CD8-positive, alpha-beta T cell (primary cell): ENCODE measurements at regions of chrX and their contacts with region 1.

Region 1: DNA sequence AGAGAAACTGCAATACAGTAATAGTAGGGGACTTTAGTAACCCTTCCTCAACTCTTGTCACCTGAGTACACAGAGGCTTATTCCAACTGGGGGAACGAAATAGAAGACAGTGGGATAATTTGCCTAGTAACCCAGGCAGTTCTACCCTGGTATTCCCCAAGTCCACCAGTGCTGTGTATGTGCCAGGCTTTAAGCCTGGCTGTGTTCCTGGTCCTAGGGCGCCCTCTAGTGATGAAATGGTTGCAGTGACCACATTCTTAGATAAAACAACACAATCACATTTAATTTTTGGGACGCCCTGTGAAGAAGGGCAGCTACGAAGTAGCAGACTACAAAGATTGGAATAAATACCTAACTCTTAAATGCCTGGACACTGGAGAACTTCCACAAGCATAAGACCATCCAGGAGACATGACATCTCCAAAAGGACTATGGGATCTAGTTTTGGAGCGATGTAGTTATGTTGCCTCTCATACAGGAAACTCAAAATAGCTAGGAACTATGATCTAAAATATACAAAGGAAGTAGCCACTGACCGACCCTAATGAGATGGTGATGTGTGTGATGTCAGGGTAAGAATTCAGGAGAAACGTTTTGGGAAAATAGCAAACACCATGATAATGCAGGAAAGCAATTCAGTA is 288.5 kb upstream of the ZCCHC13 start:
- DNase-seq: peak; percentile 12 to 80 (median 59)
- ATAC-seq: no peak
- H3K4me3 ChIP-seq: no peak overlapping the region
- H3K4me3 Mint-ChIP-seq: no peak overlapping the region
- H3K27ac ChIP-seq: no peak overlapping the region
- H3K27ac Mint-ChIP-seq: no peak overlapping the region
- H3K4me1 ChIP-seq: no peaks in the 10 kb centered on the region
- H3K4me1 Mint-ChIP-seq: peaks cover 4% of the 10 kb centered on the region
- H3K27me3 ChIP-seq: no peaks in the 10 kb centered on the region
- H3K27me3 Mint-ChIP-seq: no peaks in the 10 kb centered on the region
- CTCF ChIP-seq: peak; percentile 75

Region 2: DNA sequence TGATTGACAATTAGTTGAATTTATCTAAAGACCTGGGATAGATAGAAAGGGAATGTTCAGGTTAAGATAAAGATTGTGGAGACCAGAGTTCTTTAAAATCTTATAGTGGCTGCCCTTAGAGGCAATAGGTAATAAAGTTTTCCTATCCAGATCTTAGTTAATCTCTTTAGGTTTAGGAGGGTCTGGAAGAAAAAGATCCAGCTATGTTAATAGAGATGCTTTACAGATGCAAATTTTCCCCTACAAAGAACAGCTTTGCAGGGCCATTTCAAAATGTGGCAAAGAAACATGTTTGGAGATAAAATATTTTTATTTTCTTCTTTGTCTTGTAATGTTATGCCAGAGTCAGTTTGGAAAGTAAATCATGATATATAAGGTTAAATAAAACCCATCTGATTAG is 506.6 kb before region 1 on chrX:
- CTCF ChIA-PET with region 1: no interaction called
- POLR2A ChIA-PET with region 1: no interaction called
- intact Hi-C with region 1: no loop called
- DNase-seq: no peak
- ATAC-seq: no peak
- H3K4me3 ChIP-seq: no peak overlapping the region
- H3K4me3 Mint-ChIP-seq: no peak overlapping the region
- H3K27ac ChIP-seq: no peak overlapping the region
- H3K27ac Mint-ChIP-seq: no peak overlapping the region
- H3K4me1 ChIP-seq: no peaks in the 10 kb centered on the region
- H3K4me1 Mint-ChIP-seq: no peaks in the 10 kb centered on the region
- H3K27me3 ChIP-seq: no peaks in the 10 kb centered on the region
- H3K27me3 Mint-ChIP-seq: no peaks in the 10 kb centered on the region
- CTCF ChIP-seq: no peak

Region 3: DNA sequence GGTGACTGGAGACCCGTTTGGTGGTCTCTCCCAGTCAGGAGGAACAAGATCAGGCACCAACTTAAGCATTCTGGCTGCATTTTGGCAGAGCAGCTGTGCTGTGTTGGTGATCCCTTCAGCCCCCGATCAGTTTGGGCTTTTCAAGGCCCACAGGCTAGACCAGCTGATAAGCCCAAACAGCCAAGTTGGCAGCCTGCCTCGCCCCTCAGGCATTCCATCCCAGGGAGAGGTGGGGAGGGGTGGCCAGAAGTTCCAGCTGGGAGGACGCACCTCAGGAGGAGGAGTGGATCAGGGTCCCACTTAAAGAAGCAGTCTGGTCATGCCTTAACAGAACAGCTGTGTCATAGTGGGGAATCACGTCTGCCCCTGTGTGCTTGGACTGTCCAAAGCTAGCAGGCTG is 346.7 kb before region 1 on chrX:
- CTCF ChIA-PET with region 1: no interaction called
- POLR2A ChIA-PET with region 1: no interaction called
- intact Hi-C with region 1: no loop called
- DNase-seq: no peak
- ATAC-seq: no peak
- H3K4me3 ChIP-seq: no peak overlapping the region
- H3K4me3 Mint-ChIP-seq: no peak overlapping the region
- H3K27ac ChIP-seq: no peak overlapping the region
- H3K27ac Mint-ChIP-seq: no peak overlapping the region
- H3K4me1 ChIP-seq: no peaks in the 10 kb centered on the region
- H3K4me1 Mint-ChIP-seq: peaks cover 7% of the 10 kb centered on the region
- H3K27me3 ChIP-seq: no peaks in the 10 kb centered on the region
- H3K27me3 Mint-ChIP-seq: no peaks in the 10 kb centered on the region
- CTCF ChIP-seq: no peak

Region 4: DNA sequence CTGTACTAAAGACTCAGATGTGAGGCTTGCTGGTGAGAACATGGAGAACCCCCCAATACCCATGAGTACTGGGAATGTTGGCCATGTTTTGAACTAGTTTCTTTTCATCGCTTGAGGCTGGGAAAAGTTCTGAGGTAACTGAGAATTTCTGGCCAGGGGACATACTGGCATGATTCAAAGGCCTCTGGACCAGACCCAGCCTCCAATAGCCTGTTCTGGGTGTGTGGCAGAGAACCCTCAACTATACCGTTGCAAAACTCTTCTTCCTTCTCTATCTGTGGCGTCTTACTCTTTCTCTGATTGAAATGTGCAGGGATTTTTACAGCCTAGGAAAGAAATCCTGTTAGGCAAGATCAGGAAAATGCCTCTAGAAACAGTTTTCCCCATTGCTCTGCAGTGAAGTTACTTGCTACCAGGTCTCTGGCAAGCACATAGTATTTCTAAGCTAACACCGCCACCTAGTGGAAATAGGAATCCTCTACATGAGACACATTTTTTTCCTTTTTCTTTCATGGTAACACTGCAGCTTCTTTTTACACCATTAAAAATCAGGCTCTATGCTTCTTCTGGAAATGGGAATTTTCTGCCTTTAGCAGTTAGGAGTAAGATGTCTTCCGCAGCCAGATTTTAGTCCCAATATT is 117.8 kb after region 1 on chrX:
- CTCF ChIA-PET with region 1: no interaction called
- POLR2A ChIA-PET with region 1: no interaction called
- intact Hi-C with region 1: loop called (anchors 2 kb)
- DNase-seq: peak in 5 of 9 experiments; percentile 10 to 60 (median 28)
- ATAC-seq: peak; percentile 40
- H3K4me3 ChIP-seq: no peak overlapping the region
- H3K4me3 Mint-ChIP-seq: no peak overlapping the region
- H3K27ac ChIP-seq: no peak overlapping the region
- H3K27ac Mint-ChIP-seq: no peak overlapping the region
- H3K4me1 ChIP-seq: no peaks in the 10 kb centered on the region
- H3K4me1 Mint-ChIP-seq: no peaks in the 10 kb centered on the region
- H3K27me3 ChIP-seq: no peaks in the 10 kb centered on the region
- H3K27me3 Mint-ChIP-seq: no peaks in the 10 kb centered on the region
- CTCF ChIP-seq: no peak

Region 5: GRCh38 chrX:74343343-74344279 is 328.1 kb after region 1 on chrX:
- CTCF ChIA-PET with region 1: no interaction called
- POLR2A ChIA-PET with region 1: no interaction called
- intact Hi-C with region 1: loop called in 1 of 2 experiments (anchors 5 kb)
- DNase-seq: peak; percentile 1 to 67 (median 33)
- ATAC-seq: peak; percentile 40
- H3K4me3 ChIP-seq: no peak overlapping the region
- H3K4me3 Mint-ChIP-seq: no peak overlapping the region
- H3K27ac ChIP-seq: no peak overlapping the region
- H3K27ac Mint-ChIP-seq: no peak overlapping the region
- H3K4me1 ChIP-seq: no peaks in the 10 kb centered on the region
- H3K4me1 Mint-ChIP-seq: peaks cover 2% of the 10 kb centered on the region
- H3K27me3 ChIP-seq: no peaks in the 10 kb centered on the region
- H3K27me3 Mint-ChIP-seq: peaks cover 3% of the 10 kb centered on the region
- CTCF ChIP-seq: peak; percentile 36